ENCODE measurements at regions of chr10 and their contacts with region 1.

Region 1: DNA sequence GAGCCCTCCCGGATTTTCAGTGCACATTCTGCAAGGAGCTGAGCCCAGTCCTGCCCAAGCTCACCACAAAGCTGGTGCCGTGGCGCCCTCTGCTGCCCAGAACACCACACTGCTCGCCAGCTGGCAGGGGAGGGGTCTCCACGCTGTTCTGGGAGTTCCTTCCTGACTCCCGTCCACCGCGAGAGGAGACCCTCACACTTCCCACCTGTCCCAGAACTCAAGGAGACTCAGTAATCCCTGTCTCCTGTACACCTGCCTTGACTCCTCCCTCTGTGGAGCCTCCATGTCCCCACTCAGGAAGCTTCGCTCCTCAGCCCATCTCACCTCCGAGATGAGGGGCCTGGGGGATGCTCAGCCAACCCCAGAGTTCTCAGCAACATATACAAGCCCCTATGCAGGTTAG is 11.3 kb downstream of the C10orf105 start:
- DNase-seq: peak; percentile 73
- H3K4me3 Mint-ChIP-seq: no peak overlapping the region
- H3K27ac Mint-ChIP-seq: no peak overlapping the region
- H3K4me1 Mint-ChIP-seq: peaks cover 32% of the 10 kb centered on the region
- H3K27me3 Mint-ChIP-seq: no peaks in the 10 kb centered on the region

Region 2: GRCh38 chr10:71383972-71384687 is 324.2 kb before region 1 on chr10:
- CTCF ChIA-PET with region 1: interaction called, 38 read pairs
- POLR2A ChIA-PET with region 1: no interaction called
- DNase-seq: peak; percentile 75
- H3K4me3 Mint-ChIP-seq: no peak overlapping the region
- H3K27ac Mint-ChIP-seq: no peak overlapping the region
- H3K4me1 Mint-ChIP-seq: no peaks in the 10 kb centered on the region
- H3K27me3 Mint-ChIP-seq: peaks cover 11% of the 10 kb centered on the region

Region 3: GRCh38 chr10:71696628-71697326 is 11.5 kb before region 1 on chr10:
- CTCF ChIA-PET with region 1: interaction called, 160 read pairs
- POLR2A ChIA-PET with region 1: interaction called, 7 read pairs
- DNase-seq: peak; percentile 71
- H3K4me3 Mint-ChIP-seq: no peak overlapping the region
- H3K27ac Mint-ChIP-seq: no peak overlapping the region
- H3K4me1 Mint-ChIP-seq: peaks cover 65% of the 10 kb centered on the region
- H3K27me3 Mint-ChIP-seq: no peaks in the 10 kb centered on the region

Region 4: DNA sequence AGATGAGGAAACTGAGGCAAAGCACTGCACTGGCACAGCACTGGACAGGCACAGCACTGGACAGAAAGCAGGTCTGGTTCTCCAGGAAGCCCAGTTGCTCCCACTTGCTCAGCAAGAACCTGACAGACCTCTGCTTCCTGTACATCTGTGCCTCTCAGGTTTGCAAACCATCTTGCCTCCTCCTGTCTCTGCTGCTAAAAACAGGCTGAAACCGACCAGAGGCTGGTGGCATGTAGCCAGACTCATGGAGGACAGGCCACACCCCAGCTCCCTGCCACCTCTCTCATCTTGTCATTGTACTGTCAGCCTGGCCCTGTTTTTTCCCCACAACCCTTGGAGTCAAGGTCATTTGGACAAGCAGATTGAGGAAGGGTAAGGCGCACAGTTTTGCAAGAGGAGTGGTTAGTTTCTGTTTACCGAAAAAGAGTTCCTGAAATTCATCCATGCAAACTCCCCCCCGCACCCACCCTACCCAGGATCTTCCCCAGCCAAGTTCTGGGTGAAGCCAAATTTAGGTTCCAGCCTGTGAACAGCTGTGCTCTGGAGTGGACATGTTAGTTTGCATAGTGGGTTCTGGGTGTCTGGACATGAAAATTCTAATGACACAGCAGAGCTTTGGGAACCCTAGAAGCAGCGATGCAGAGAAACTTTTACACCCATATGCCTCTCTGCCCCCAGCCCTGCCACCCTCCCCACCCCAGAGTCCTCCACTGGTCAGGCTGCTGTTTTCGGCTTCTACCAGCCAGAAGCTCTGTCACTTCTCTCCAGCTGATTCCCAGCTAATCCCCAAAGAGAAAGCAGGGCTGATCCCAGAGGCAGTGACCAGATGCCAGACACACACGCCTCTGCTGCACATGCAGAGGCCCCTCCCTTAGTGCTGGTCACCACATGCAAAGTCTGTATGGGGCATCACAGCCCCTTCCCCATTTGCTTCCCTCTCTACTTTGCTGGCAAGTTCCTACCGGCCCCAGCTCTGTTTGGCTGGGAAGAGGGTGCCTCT is 19.7 kb after region 1 on chr10:
- CTCF ChIA-PET with region 1: interaction called, 16 read pairs
- POLR2A ChIA-PET with region 1: interaction called, 47 read pairs
- DNase-seq: peak; percentile 76
- H3K4me3 Mint-ChIP-seq: peak overlapping the region; percentile 52
- H3K27ac Mint-ChIP-seq: peak overlapping the region; percentile 98
- H3K4me1 Mint-ChIP-seq: peaks cover 76% of the 10 kb centered on the region
- H3K27me3 Mint-ChIP-seq: no peaks in the 10 kb centered on the region

Region 5: DNA sequence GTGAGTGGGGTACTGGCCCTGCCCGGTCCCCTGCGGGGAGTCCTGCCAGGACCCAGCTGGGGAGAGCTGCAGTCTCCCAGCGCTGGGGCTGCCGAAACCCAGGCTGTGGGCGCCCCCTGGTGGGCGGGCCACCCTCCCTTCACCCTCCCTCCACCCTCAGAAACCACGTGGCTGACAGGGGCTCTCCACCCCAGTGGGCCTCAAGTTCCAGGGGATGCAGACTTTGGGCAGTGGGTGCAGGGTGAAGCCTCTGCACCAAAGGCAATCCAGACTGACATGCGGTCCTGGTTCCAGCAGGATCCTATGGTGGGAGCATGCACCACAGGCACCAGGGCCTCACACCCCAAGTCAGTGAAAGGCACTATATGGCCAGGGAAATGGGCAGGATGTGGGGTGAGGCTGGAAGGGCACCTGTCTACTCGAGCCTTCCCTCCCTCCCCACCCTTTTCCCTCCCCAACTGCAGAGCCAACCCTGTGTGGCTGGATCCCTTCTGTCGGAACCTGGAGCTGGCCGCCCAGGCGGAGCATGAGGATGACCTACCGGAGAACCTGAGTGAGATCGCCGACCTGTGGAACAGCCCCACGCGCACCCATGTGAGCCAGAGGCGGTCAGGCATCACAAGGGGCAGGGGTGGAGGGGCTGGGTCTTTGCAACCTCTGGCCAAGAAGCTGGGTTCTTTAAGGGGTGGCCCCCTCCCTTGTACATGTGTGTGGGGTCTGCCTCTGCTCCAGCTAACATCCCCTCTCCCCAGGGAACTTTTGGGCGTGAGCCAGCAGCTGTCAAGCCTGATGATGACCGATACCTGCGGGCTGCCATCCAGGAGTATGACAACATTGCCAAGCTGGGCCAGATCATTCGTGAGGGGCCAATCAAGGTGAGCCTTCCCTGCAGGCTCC is 104.0 kb after region 1 on chr10:
- CTCF ChIA-PET with region 1: interaction called, 15 read pairs
- POLR2A ChIA-PET with region 1: no interaction called
- DNase-seq: peak; percentile 81
- H3K4me3 Mint-ChIP-seq: no peak overlapping the region
- H3K27ac Mint-ChIP-seq: no peak overlapping the region
- H3K4me1 Mint-ChIP-seq: no peaks in the 10 kb centered on the region
- H3K27me3 Mint-ChIP-seq: peaks cover 1% of the 10 kb centered on the region